ENCODE measurements at regions of chr16 and their contacts with region 1.

Region 1: GRCh38 chr16:62717026-62717425 is 680.8 kb upstream of the CDH8 start:
- DNase-seq: no peak
- H3K4me3 ChIP-seq: no peak overlapping the region
- H3K27ac ChIP-seq: no peak overlapping the region
- H3K4me1 ChIP-seq: no peaks in the 10 kb centered on the region
- H3K27me3 ChIP-seq: no peaks in the 10 kb centered on the region
- CTCF ChIP-seq: no peak
- EP300 ChIP-seq: no peak
- POLR2A ChIP-seq: no peak

Region 2: GRCh38 chr16:62462971-62463370 is 254.1 kb before region 1 on chr16:
- in situ Hi-C with region 1: no loop called
- intact Hi-C with region 1: loop called (anchors 5 kb)
- DNase-seq: no peak
- H3K4me3 ChIP-seq: no peak overlapping the region
- H3K27ac ChIP-seq: no peak overlapping the region
- H3K4me1 ChIP-seq: no peaks in the 10 kb centered on the region
- H3K27me3 ChIP-seq: no peaks in the 10 kb centered on the region
- CTCF ChIP-seq: no peak
- EP300 ChIP-seq: no peak
- POLR2A ChIP-seq: no peak

Measured in transverse colon (tissue), 4 donors.